ENCODE measurements at regions of chr18 and their contacts with region 1.

Region 1: DNA sequence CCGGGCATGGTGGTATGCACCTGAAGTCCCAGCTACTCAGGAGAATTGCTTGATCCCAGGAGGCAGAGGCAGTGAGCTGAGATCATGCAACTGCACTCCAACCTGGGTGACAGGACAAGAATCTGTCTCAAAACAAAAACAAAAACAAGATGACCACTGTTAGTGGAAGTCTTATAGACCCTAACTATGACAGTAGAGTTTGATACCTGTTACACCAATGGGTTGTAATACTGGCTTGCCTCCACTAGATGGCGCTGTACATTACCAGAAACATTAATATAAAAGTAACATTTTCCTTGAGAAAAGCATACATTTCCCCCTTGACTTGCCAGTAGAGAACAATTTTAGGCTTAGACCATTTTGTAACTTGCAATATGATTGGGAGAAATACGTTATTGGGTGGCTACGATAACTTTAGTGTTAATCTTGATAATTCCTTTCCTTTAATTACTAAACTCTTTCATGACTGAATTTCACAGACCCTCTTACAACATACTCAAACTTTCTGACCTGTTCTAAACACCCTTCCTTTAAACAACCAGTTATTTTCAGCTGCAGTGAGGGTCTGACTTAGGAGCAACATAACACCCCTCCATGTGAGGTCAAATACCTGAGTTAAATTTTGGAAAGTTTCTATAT is 19.5 kb downstream of the SLC25A52 start:
- DNase-seq: no peak
- ATAC-seq: peak; percentile 31
- H3K4me3 Mint-ChIP-seq: no peak overlapping the region
- H3K27ac Mint-ChIP-seq: no peak overlapping the region
- H3K4me1 Mint-ChIP-seq: peaks cover 2% of the 10 kb centered on the region
- H3K27me3 Mint-ChIP-seq: no peaks in the 10 kb centered on the region
- CTCF ChIP-seq: peak; percentile 94

Region 2: GRCh38 chr18:31819106-31819924 is 78.1 kb after region 1 on chr18:
- CTCF ChIA-PET with region 1: interaction called, 3 read pairs
- POLR2A ChIA-PET with region 1: no interaction called
- intact Hi-C with region 1: loop called (anchors 1 kb)
- DNase-seq: no peak
- ATAC-seq: no peak
- H3K4me3 Mint-ChIP-seq: no peak overlapping the region
- H3K27ac Mint-ChIP-seq: no peak overlapping the region
- H3K4me1 Mint-ChIP-seq: no peaks in the 10 kb centered on the region
- H3K27me3 Mint-ChIP-seq: no peaks in the 10 kb centered on the region
- CTCF ChIP-seq: no peak

Region 3: DNA sequence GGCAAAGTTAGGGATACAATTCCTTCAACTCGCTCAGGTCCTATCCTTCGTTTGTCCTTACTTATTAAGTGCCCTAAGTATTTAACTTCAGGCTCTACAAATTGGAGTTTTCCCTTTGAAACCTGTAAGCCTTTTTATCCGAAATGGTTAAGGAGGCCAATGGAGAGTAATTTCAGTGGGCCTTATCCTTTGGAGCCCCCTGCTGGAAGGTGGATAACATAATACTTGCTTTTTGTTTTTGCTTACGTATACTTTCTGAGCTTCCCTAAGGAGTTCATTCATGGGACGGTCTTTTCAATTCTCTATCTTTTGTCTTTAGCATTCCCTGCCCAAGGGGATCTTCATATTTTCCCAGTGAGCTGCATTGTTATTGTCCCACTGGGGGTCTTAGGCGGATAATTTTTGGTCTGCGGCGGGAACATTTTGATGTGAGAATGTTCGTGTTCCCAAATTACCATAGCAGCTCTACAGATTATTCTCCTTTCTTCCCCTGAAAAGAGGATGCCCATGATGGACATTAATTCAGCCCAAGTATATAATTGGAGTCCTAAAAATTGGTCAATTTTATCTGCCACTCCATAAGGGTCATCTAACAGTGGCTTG is 236.2 kb after region 1 on chr18:
- CTCF ChIA-PET with region 1: no interaction called
- POLR2A ChIA-PET with region 1: no interaction called
- intact Hi-C with region 1: loop called (anchors 1 kb)
- DNase-seq: no peak
- ATAC-seq: peak; percentile 25
- H3K4me3 Mint-ChIP-seq: no peak overlapping the region
- H3K27ac Mint-ChIP-seq: no peak overlapping the region
- H3K4me1 Mint-ChIP-seq: no peaks in the 10 kb centered on the region
- H3K27me3 Mint-ChIP-seq: no peaks in the 10 kb centered on the region
- CTCF ChIP-seq: no peak

Region 4: GRCh38 chr18:32072321-32072720 is 331.1 kb after region 1 on chr18:
- CTCF ChIA-PET with region 1: no interaction called
- POLR2A ChIA-PET with region 1: no interaction called
- intact Hi-C with region 1: loop called (anchors 2 kb)
- DNase-seq: no peak
- ATAC-seq: peak; percentile 28
- H3K4me3 Mint-ChIP-seq: no peak overlapping the region
- H3K27ac Mint-ChIP-seq: no peak overlapping the region
- H3K4me1 Mint-ChIP-seq: no peaks in the 10 kb centered on the region
- H3K27me3 Mint-ChIP-seq: no peaks in the 10 kb centered on the region
- CTCF ChIP-seq: no peak

Region 5: DNA sequence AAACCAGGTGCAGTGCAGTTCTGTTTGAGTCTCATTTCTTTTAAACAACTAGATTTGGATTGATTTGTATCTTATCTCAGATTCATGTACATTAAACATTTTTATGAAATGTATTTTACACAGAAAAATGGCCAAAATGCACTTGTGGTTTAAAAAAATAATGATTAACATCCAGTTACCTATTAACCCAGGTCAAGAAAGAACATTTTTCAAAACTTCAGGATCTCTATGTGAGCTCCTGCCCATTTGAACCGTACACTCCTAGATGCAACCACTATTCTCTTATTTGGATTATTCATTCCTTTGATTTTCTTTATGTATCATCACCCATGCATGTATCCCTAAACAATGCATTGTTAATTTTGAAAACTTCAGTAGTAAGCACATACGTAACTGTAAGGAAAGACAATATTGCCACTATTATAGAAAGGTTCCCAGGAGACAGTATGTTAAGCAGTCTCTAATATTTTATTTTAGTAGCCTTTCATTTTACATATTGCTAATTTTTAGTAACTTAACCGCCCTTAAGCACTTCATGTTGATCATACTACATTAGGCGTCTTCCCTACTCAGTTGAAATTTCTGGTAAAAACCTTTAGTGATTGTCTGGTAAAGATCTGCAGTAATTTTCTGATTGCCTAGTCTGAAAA is 373.2 kb after region 1 on chr18:
- CTCF ChIA-PET with region 1: no interaction called
- POLR2A ChIA-PET with region 1: no interaction called
- intact Hi-C with region 1: loop called (anchors 5 kb)
- DNase-seq: no peak
- ATAC-seq: no peak
- H3K4me3 Mint-ChIP-seq: no peak overlapping the region
- H3K27ac Mint-ChIP-seq: no peak overlapping the region
- H3K4me1 Mint-ChIP-seq: peaks cover 7% of the 10 kb centered on the region
- H3K27me3 Mint-ChIP-seq: no peaks in the 10 kb centered on the region
- CTCF ChIP-seq: no peak

Measured in activated B cell treated with CpG ODN at 0.5 μM for 24 hours (primary cell).